ENCODE measurements at regions of chr1 and their contacts with region 1.

Region 1: DNA sequence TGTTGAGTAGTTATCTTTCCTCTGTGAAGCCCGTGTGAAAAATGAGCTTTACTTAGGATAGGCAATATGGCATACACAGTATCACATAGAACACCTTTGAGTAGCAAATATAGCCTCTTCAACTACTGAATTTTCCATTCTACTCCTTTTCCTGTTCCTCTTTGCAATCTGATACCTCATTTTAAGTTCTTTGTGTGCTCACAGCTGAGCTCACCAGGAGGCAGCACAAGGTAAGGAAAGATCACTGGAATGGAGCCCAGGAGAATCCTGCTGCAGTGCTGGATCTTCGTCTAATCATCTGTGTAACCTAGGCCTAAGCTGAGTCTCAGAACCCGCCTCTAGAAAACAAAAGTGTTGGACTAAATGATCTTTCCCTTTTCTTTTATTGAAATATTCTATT is 171.0 kb downstream of the LRRC40 start:
- DNase-seq: no peak
- H3K4me3 ChIP-seq: no peak overlapping the region
- H3K27me3 ChIP-seq: no peaks in the 10 kb centered on the region
- CTCF ChIP-seq: peak; percentile 60

Region 2: DNA sequence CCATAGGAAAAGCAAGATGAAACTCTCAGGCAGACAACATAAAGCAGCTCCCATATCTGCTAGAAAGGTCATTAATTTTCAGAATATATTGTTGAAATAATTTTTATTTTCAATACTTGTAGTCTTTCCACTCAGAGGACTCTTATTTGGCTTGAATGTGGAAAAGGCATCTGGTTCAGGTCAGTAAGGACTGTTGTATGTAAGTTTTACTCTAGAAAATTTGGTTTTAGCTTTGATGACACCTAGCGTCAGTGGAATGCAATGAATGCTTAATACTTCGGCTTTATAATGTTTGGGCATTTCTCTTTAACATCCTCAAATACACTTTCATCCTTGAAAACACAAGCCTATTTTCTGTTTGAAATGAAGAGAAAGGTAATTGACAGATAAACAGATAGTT is 107.7 kb after region 1 on chr1:
- CTCF ChIA-PET with region 1: interaction called, 20 read pairs
- POLR2A ChIA-PET with region 1: no interaction called
- DNase-seq: no peak
- H3K4me3 ChIP-seq: no peak overlapping the region
- H3K27me3 ChIP-seq: no peaks in the 10 kb centered on the region
- CTCF ChIP-seq: peak; percentile 49

Region 3: GRCh38 chr1:70190180-70190579 is 155.8 kb after region 1 on chr1:
- CTCF ChIA-PET with region 1: no interaction called
- POLR2A ChIA-PET with region 1: interaction called, 18 read pairs
- DNase-seq: no peak
- H3K4me3 ChIP-seq: no peak overlapping the region
- H3K27me3 ChIP-seq: no peaks in the 10 kb centered on the region
- CTCF ChIP-seq: no peak

Measured in BJ (cell line).